ENCODE measurements at regions of chr9 and their contacts with region 1.

Region 1: DNA sequence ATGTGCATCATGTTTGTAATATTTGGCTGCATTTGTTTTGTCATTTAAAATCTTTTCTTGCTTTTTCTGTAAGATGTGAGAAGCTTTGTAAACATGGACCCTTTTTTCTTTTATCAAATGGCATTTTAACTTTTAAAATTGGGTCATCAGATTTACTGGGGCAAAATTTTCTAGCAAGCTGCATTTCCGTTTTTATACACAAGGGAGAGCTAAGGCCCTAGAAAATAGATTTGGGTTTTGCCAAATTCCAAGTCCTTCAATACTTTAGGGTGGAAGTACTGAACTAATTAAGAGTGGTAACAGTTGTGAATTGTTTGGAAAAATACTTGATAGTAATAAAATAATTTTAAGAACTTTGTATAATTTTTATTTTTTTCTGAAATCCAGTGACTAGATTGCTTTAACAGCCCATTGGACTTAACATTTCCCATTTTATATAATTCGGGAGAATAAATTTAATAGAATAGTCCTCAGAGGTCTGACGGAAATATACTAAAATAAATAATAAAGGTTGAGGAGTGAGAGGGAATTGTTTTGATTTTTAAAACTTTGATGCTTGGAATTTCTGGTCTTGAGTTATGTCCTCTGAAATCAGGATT is 117.4 kb downstream of the SMARCA2 start:
- DNase-seq: peak in 1 of 35 experiments; percentile 33
- ATAC-seq: no peak
- H3K4me3 ChIP-seq: no peak overlapping the region
- H3K4me3 Mint-ChIP-seq: no peak overlapping the region
- H3K27ac ChIP-seq: no peak overlapping the region
- H3K27ac Mint-ChIP-seq: no peak overlapping the region
- H3K4me1 ChIP-seq: no peaks in the 10 kb centered on the region
- H3K4me1 Mint-ChIP-seq: peaks cover 47 to 48% (median 48%) of the 10 kb centered on the region in 3 donors
- H3K27me3 ChIP-seq: no peaks in the 10 kb centered on the region
- H3K27me3 Mint-ChIP-seq: no peaks in the 10 kb centered on the region

Region 2: GRCh38 chr9:2000314-2000713 is 132.3 kb before region 1 on chr9:
- CTCF ChIA-PET with region 1: interaction called in 1 of 2 experiments, 10 read pairs
- POLR2A ChIA-PET with region 1: no interaction called
- DNase-seq: no peak
- ATAC-seq: no peak
- H3K4me3 ChIP-seq: no peak overlapping the region
- H3K4me3 Mint-ChIP-seq: no peak overlapping the region
- H3K27ac ChIP-seq: no peak overlapping the region
- H3K27ac Mint-ChIP-seq: no peak overlapping the region
- H3K4me1 ChIP-seq: peaks cover 0 to 15% of the 10 kb centered on the region in 2 experiments
- H3K4me1 Mint-ChIP-seq: peaks cover 7 to 15% (median 11%) of the 10 kb centered on the region in 3 donors
- H3K27me3 ChIP-seq: peaks cover 0 to 2% of the 10 kb centered on the region in 2 experiments
- H3K27me3 Mint-ChIP-seq: peaks cover 2 to 5% of the 10 kb centered on the region in 2 donors

Region 3: DNA sequence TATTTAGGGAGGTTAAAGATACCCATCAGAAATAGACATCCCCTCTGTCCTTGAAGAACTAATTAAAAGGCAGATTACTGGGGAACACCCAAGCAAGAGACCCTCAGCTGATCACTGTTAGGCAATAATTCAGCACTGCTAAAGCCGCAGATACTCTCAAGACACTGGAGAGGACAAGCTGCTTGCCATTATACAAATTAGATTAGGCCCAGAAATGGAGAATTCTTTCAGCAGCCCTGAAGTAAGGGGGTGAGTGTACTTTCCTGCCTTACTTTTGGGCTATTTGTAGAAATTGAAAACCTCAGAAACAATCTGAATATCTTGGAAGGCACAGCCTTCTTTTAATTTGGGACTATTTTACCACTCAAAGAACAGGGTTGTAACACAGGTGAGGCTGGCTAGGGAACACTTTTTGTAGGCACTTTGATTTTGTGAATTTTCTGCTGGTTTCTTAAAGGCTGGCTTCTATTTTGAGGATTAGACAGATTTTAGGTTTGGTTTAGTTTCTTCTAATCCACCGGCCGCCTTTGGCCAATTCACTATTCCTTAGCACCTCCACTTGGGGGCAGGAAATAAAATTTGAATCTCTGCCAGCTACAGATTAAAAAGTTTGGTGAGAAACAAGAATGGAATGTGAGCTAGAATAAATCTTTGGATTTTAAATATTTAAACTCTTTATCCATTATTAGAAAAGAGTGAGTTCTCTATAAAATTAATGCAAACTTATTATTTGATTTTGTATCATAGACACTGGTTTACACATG is 11.5 kb before region 1 on chr9:
- CTCF ChIA-PET with region 1: interaction called in 1 of 2 experiments, 11 read pairs
- POLR2A ChIA-PET with region 1: no interaction called
- DNase-seq: no peak
- ATAC-seq: no peak
- H3K4me3 ChIP-seq: no peak overlapping the region
- H3K4me3 Mint-ChIP-seq: no peak overlapping the region
- H3K27ac ChIP-seq: no peak overlapping the region
- H3K27ac Mint-ChIP-seq: peak overlapping the region in 1 of 2 donors; percentile 67
- H3K4me1 ChIP-seq: peaks cover 4 to 5% of the 10 kb centered on the region in 2 experiments
- H3K4me1 Mint-ChIP-seq: peaks cover 29 to 37% (median 31%) of the 10 kb centered on the region in 3 donors
- H3K27me3 ChIP-seq: no peaks in the 10 kb centered on the region
- H3K27me3 Mint-ChIP-seq: no peaks in the 10 kb centered on the region

Region 4: DNA sequence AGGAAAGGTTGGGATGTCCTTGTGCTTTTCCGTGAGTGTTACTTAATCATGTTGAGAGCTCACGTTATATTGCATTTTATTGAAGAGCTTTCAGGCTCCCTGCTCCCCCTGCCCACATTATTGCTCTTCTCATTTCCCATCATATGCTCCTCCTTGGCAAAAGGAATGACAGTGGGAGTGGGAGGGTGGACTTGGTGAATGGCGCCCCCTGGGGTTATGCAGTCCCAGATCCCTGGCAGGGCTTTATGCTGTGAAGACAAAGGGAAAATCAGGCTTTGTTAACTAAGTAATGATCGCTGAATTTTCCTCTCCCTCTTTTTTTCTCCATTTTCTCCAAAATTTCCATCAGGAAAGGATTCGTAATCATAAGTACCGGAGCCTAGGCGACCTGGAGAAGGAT is 49.2 kb after region 1 on chr9:
- CTCF ChIA-PET with region 1: interaction called, 4 to 12 read pairs
- POLR2A ChIA-PET with region 1: no interaction called
- DNase-seq: peak in 1 of 35 experiments; percentile 33
- ATAC-seq: no peak
- H3K4me3 ChIP-seq: no peak overlapping the region
- H3K4me3 Mint-ChIP-seq: no peak overlapping the region
- H3K27ac ChIP-seq: no peak overlapping the region
- H3K27ac Mint-ChIP-seq: no peak overlapping the region
- H3K4me1 ChIP-seq: no peaks in the 10 kb centered on the region
- H3K4me1 Mint-ChIP-seq: peaks cover 0 to 9% (median 8%) of the 10 kb centered on the region in 3 donors
- H3K27me3 ChIP-seq: no peaks in the 10 kb centered on the region
- H3K27me3 Mint-ChIP-seq: no peaks in the 10 kb centered on the region

Region 5: DNA sequence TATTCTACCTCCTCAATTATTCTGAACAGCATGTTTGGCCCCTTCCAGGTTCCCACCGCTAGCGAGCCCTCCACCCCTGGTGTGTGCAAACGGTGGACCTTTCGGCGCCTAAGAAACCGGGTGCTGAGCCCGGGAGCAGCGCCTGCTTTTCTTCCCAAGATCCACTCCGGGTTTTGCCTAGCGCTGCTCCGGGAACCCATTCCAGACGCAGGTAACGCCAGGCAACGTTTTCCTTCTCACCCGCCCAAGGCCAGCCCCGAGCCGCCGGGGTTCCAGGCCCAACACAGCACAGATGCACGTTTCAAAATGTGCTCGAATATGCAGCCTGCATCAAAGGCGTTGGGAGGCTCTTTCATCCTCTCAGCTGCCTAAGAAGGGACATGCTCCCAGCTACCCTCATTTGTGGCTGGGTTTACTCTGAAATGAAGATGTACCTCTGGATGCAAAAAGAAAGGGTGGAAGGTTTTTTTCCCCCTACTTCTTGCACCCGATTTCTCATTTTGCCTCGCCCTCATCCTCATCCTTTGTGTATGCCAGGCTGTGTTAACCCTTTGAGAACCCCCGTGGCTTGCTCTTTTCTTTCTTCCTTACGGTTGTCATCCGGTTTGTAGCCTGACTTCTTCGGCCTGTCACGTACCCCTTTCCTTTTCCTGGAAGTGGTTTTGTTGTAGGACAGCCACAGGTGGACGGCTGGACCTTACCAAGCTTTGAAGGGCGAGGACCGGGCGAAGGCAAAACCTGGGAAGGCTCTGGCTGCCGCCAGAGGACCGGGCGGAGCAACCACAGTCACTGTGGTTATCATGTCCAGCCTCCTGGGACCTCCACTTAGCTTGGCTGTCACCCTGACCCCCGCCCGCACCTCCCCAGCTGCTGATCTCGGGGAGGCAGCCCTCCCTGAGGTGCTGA is 109.5 kb after region 1 on chr9:
- CTCF ChIA-PET with region 1: no interaction called
- POLR2A ChIA-PET with region 1: no interaction called
- DNase-seq: peak in 32 of 35 experiments; percentile 4 to 68 (median 24)
- ATAC-seq: peak; percentile 68 to 95 (median 77)
- H3K4me3 ChIP-seq: peak overlapping the region; percentile 34 to 60
- H3K4me3 Mint-ChIP-seq: peak overlapping the region; percentile 69 to 80 (median 74)
- H3K27ac ChIP-seq: no peak overlapping the region
- H3K27ac Mint-ChIP-seq: no peak overlapping the region
- H3K4me1 ChIP-seq: peaks cover 4 to 17% of the 10 kb centered on the region in 2 experiments
- H3K4me1 Mint-ChIP-seq: peaks cover 16 to 19% (median 18%) of the 10 kb centered on the region in 3 donors
- H3K27me3 ChIP-seq: peaks cover 0 to 17% of the 10 kb centered on the region in 2 experiments
- H3K27me3 Mint-ChIP-seq: peaks cover 16 to 17% of the 10 kb centered on the region in 2 donors